Activated B cell treated with CpG ODN at 0.5 μM for 24 hours (primary cell): ENCODE measurements at regions of chr10 and their contacts with region 1.

Region 1: GRCh38 chr10:89793649-89794254 is 92.4 kb downstream of the KIF20B start:
- DNase-seq: no peak
- ATAC-seq: peak; percentile 57
- H3K4me3 Mint-ChIP-seq: no peak overlapping the region
- H3K27ac Mint-ChIP-seq: no peak overlapping the region
- H3K4me1 Mint-ChIP-seq: peaks cover 4% of the 10 kb centered on the region
- H3K27me3 Mint-ChIP-seq: no peaks in the 10 kb centered on the region
- CTCF ChIP-seq: peak; percentile 80

Region 2: DNA sequence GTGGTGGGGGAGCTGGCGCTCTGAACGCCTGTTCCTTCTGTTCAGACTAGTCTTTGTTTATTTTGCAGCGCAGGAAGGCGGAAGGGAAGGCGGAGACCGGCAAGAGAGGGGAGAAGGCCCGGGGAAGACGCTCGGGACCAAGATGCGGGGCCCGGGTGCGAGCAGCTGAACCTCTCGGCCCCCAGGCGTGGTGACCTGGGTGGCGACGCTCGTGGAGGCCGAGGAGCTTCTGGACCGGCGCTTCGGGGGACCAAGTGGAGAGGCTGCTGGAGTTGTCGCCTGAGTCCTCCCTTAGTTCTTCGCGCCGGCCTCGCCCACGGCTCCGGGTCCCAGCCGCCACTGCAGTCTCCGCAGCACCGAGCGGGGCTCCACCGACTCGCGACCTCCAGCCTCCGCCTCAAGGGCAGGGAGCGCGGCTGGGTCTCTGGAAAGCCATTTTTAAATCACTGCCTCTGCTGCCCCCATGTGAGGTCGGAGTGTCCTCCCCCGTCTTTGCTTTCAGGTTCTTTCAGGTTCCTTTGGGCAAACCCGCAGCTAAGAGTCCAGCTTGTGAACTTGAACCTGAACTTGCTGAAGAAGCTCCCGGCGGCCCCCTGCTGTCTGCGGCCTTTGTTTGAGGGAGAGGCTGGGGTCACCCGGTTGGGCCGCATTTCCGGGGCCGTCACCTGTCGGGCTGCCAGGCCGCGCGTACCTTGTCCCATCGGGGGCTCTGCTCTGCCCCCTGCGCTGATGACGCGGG is 43.6 kb after region 1 on chr10:
- CTCF ChIA-PET with region 1: no interaction called
- POLR2A ChIA-PET with region 1: no interaction called
- intact Hi-C with region 1: loop called (anchors 2 kb)
- DNase-seq: peak; percentile 48
- ATAC-seq: peak; percentile 70
- H3K4me3 Mint-ChIP-seq: peak overlapping the region; percentile 83
- H3K27ac Mint-ChIP-seq: peak overlapping the region; percentile 75
- H3K4me1 Mint-ChIP-seq: peaks cover 15% of the 10 kb centered on the region
- H3K27me3 Mint-ChIP-seq: peaks cover 3% of the 10 kb centered on the region
- CTCF ChIP-seq: no peak

Region 3: GRCh38 chr10:90047243-90047729 is 253.5 kb after region 1 on chr10:
- CTCF ChIA-PET with region 1: no interaction called
- POLR2A ChIA-PET with region 1: no interaction called
- intact Hi-C with region 1: loop called (anchors 1 kb)
- DNase-seq: no peak
- ATAC-seq: peak; percentile 82
- H3K4me3 Mint-ChIP-seq: peak overlapping the region; percentile 68
- H3K27ac Mint-ChIP-seq: peak overlapping the region; percentile 94
- H3K4me1 Mint-ChIP-seq: peaks cover 44% of the 10 kb centered on the region
- H3K27me3 Mint-ChIP-seq: no peaks in the 10 kb centered on the region
- CTCF ChIP-seq: no peak

Region 4: DNA sequence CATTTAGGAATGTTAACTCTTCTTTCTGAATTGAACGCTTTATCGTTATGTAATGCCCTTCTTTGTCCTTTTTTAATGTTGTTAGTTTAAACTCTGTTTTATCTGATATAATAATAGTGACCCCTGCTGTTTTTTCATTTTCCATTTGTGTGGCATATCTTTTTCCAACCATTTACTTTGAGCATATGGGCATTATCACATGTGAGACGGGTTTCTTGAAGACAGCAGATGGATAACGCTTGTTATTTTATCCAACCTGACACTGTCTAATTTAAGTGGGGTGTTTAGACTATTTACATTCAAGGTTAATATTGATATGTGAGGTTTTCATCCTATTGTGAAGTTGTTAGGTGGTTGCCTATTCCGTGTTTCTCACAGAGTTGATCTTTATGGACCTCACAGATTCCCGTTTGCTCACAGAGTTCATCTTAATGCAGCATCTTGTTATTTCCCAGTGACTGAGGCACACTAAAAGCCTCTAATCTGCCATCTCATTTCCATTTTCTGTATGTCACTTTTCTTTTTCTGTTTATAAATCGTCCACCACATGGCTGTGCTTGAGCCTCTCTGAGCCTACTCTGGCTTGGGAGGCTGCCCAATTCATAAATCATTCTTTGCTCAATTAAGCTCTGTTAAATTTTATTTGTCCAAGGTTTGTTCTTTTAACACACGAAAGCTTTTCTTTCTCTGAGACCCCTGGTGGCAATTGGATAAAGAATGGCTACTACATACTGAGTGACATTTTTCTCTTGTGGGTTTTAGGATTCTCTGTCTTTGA is 777.9 kb after region 1 on chr10:
- CTCF ChIA-PET with region 1: no interaction called
- POLR2A ChIA-PET with region 1: no interaction called
- intact Hi-C with region 1: loop called (anchors 5 kb)
- DNase-seq: no peak
- ATAC-seq: no peak
- H3K4me3 Mint-ChIP-seq: no peak overlapping the region
- H3K27ac Mint-ChIP-seq: no peak overlapping the region
- H3K4me1 Mint-ChIP-seq: no peaks in the 10 kb centered on the region
- H3K27me3 Mint-ChIP-seq: peaks cover 16% of the 10 kb centered on the region
- CTCF ChIP-seq: no peak

Region 5: DNA sequence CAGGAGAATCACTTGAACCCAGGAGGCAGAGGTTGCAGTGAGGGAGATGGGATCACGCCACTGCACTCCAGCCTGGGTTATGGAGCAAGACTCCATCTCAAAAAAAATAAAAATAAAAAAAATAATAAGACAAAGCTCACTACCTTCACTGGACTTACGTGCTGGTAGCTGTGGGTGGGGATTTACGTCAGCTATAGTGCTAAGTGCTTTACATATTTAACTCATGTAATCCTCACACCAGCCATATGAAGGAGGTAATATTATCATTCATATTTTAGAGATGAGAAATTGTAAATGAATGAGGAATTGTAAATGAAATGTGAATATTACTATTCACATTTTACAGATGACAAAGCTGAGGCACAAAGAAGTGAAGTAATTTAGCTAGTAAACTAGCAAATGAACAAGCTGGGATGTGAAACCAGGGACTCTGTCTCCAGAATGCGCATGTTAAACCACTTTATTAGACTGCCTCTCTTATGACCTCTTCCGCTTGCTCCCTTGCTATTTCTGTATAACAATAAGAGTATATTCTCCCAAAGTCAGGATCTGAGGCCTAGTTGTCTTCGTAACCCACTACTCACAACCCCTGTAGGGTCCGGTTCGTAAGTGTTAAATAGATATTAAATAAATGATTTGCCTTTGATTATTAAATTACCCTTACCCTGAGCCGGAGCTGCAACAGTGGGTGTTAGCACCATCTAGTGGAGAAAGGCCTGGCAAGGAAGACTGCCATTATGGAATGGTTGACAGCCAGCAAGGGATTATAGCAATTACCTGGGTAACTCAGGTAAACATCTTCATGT is 993.8 kb after region 1 on chr10:
- CTCF ChIA-PET with region 1: interaction called, 8 read pairs
- POLR2A ChIA-PET with region 1: no interaction called
- intact Hi-C with region 1: loop called (anchors 1 kb)
- DNase-seq: no peak
- ATAC-seq: no peak
- H3K4me3 Mint-ChIP-seq: no peak overlapping the region
- H3K27ac Mint-ChIP-seq: no peak overlapping the region
- H3K4me1 Mint-ChIP-seq: peaks cover 12% of the 10 kb centered on the region
- H3K27me3 Mint-ChIP-seq: peaks cover 2% of the 10 kb centered on the region
- CTCF ChIP-seq: no peak

Region 6: GRCh38 chr10:91632671-91633550 is 1839.2 kb after region 1 on chr10 and contains the start of gene PPP1R3C:
- CTCF ChIA-PET with region 1: no interaction called
- POLR2A ChIA-PET with region 1: no interaction called
- intact Hi-C with region 1: loop called (anchors 10 kb)
- DNase-seq: peak; percentile 32
- ATAC-seq: peak; percentile 74
- H3K4me3 Mint-ChIP-seq: peak within 1 kb of the TSS; percentile 75
- H3K27ac Mint-ChIP-seq: no peak within 1 kb of the TSS
- H3K4me1 Mint-ChIP-seq: peaks cover 14% of the 10 kb centered on the region
- H3K27me3 Mint-ChIP-seq: peaks cover 46% of the 10 kb centered on the region
- CTCF ChIP-seq: no peak
- total RNA-seq, gene PPP1R3C: not detected in 2 replicates